Caco-2 (cell line): ENCODE measurements at regions of chr2 and their contacts with region 1.

Region 1: GRCh38 chr2:204024503-204024902 is 87.9 kb downstream of the ICOS start:
- DNase-seq: peak; percentile 42 to 70
- H3K4me3 ChIP-seq: no peak overlapping the region
- H3K4me3 Mint-ChIP-seq: no peak overlapping the region
- H3K27ac Mint-ChIP-seq: no peak overlapping the region
- H3K4me1 ChIP-seq: no peaks in the 10 kb centered on the region
- H3K4me1 Mint-ChIP-seq: no peaks in the 10 kb centered on the region
- H3K27me3 ChIP-seq: no peaks in the 10 kb centered on the region
- H3K27me3 Mint-ChIP-seq: no peaks in the 10 kb centered on the region
- CTCF ChIP-seq: peak; percentile 65 to 75

Region 2: DNA sequence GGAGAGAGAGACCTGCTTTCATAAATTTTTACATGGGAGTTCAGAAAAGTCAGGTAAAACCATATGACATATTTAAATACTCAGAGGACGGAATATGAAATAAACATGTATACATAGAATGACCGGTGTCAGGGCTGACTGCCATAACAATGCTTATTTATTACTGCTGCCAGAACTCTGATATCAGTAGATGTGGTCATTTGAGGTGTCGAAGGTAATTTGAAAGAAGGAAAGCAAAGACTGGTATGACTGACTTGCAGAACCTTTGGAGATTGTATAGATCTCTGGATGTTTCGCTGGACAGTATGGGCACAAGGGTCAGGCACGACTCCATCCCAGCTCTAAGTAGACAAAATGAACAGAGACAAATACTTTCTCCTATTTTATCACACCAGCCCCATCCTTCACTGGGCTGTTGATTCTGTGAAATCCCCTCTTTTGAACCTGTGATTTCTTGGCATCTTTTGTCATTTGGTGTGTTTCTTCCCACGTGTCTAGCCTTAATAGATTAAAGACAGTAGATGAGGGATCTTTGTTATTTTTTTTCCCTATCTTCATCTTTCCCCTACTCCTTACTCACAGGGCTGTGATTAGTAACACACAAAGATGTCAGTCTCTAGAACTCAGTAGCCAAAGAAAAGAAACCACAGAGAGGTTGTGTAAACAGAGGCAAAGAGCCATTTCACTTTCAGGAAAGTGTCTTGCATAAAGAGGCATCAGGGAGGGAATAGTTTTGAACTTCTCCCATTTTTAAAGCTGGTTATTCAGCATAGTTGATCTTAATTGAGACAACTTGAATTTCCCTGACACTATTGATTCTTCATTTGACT is 26.3 kb before region 1 on chr2:
- CTCF ChIA-PET with region 1: no interaction called
- POLR2A ChIA-PET with region 1: no interaction called
- intact Hi-C with region 1: no loop called
- DNase-seq: no peak
- H3K4me3 ChIP-seq: no peak overlapping the region
- H3K4me3 Mint-ChIP-seq: no peak overlapping the region
- H3K27ac Mint-ChIP-seq: no peak overlapping the region
- H3K4me1 ChIP-seq: peaks cover 19% of the 10 kb centered on the region
- H3K4me1 Mint-ChIP-seq: peaks cover 11% of the 10 kb centered on the region
- H3K27me3 ChIP-seq: no peaks in the 10 kb centered on the region; the same call in 1 of the 2 replicates
- H3K27me3 Mint-ChIP-seq: peaks cover under 1% of the 10 kb centered on the region
- CTCF ChIP-seq: no peak

Region 3: DNA sequence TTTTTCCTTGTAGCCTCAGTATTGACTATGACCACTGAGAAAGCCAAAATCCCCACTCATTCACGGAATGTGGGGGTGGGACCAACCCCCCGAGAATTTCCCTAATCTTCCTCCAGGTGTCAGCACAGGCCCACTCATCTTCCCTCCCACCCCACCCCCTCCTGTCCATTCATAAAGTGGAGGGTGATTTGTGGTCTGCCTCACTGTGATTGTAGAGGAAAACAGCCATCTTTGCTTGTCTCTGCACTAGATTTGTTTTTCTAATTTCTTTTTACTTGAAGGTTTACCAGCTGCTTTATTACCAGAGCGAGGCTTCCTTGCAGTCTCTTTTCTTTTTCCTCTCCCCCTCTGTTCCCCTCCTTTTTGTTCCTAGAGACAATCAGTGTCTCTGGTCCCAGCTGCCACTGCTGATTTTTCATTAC is 83.8 kb after region 1 on chr2:
- CTCF ChIA-PET with region 1: no interaction called
- POLR2A ChIA-PET with region 1: no interaction called
- intact Hi-C with region 1: loop called (anchors 5 kb)
- DNase-seq: peak; percentile 48 to 54
- H3K4me3 ChIP-seq: no peak overlapping the region
- H3K4me3 Mint-ChIP-seq: no peak overlapping the region
- H3K27ac Mint-ChIP-seq: no peak overlapping the region
- H3K4me1 ChIP-seq: no peaks in the 10 kb centered on the region
- H3K4me1 Mint-ChIP-seq: peaks cover 19% of the 10 kb centered on the region
- H3K27me3 ChIP-seq: no peaks in the 10 kb centered on the region; the same call in 1 of the 2 replicates
- H3K27me3 Mint-ChIP-seq: peaks cover 4% of the 10 kb centered on the region
- CTCF ChIP-seq: peak; percentile 78 to 80

Region 4: DNA sequence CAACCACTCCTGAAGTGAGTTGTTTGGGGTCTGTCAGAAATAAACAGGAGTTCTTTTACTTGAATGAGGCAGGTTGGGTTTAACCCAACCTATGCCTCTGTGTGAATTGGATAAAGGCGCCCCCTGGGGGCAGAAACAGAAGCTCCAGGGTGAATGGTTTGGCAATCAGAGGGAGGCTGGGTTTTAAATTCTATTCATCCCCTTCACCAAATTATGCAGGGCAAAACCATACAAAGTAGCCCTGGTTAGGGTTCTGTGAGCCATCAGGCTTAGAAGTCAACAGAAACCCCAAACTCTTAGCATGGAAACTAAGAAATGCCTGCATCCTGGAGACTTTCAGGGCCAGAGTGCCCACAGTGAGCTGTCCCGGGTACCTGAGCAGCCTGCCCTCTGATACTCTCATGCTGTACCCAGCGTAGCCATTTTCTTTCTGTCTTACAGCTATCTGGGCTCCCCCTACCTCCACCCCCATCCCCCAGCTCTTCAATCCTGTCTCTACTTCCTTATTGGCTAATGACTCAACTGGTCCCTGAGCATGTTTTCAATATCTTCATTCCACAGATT is 153.6 kb after region 1 on chr2:
- CTCF ChIA-PET with region 1: interaction called, 12 read pairs
- POLR2A ChIA-PET with region 1: no interaction called
- intact Hi-C with region 1: loop called (anchors 1 kb)
- DNase-seq: peak; percentile 44 to 60
- H3K4me3 ChIP-seq: no peak overlapping the region
- H3K4me3 Mint-ChIP-seq: no peak overlapping the region
- H3K27ac Mint-ChIP-seq: no peak overlapping the region
- H3K4me1 ChIP-seq: no peaks in the 10 kb centered on the region
- H3K4me1 Mint-ChIP-seq: no peaks in the 10 kb centered on the region
- H3K27me3 ChIP-seq: peaks cover 2% of the 10 kb centered on the region
- H3K27me3 Mint-ChIP-seq: peaks cover 3% of the 10 kb centered on the region
- CTCF ChIP-seq: peak; percentile 56 to 65